Adrenal gland (tissue), 19 donors: ENCODE measurements at regions of chr16 and their contacts with region 1.

Region 1: GRCh38 chr16:3059000-3059722 is 6.3 kb upstream of the IL32 start:
- DNase-seq: peak; percentile 89 to 96 (median 93)
- H3K4me3 ChIP-seq: peak overlapping the region in 3 of 4 donors; percentile 22 to 85 (median 78)
- H3K27ac ChIP-seq: peak overlapping the region in 4 of 5 donors; percentile 30 to 88 (median 66)
- H3K4me1 ChIP-seq: peaks cover 9 to 17% of the 10 kb centered on the region in 2 donors
- H3K27me3 ChIP-seq: no peaks in the 10 kb centered on the region
- CTCF ChIP-seq: peak; percentile 33 to 97 (median 82)
- POLR2A ChIP-seq: peak in 1 of 2 donors; percentile 52

Region 2: GRCh38 chr16:2810651-2811050 is 248.5 kb before region 1 on chr16:
- intact Hi-C with region 1: no loop called
- DNase-seq: no peak
- H3K4me3 ChIP-seq: no peak overlapping the region
- H3K27ac ChIP-seq: no peak overlapping the region
- H3K4me1 ChIP-seq: no peaks in the 10 kb centered on the region
- H3K27me3 ChIP-seq: peaks cover under 1% of the 10 kb centered on the region
- CTCF ChIP-seq: no peak
- POLR2A ChIP-seq: no peak

Region 3: GRCh38 chr16:2990891-2991290 is 68.3 kb before region 1 on chr16:
- intact Hi-C with region 1: no loop called
- DNase-seq: no peak
- H3K4me3 ChIP-seq: no peak overlapping the region
- H3K27ac ChIP-seq: no peak overlapping the region
- H3K4me1 ChIP-seq: no peaks in the 10 kb centered on the region
- H3K27me3 ChIP-seq: no peaks in the 10 kb centered on the region
- CTCF ChIP-seq: no peak
- POLR2A ChIP-seq: no peak

Region 4: GRCh38 chr16:3123986-3124886 is 65.1 kb after region 1 on chr16:
- intact Hi-C with region 1: loop called (anchors 5 to 10 kb)
- DNase-seq: peak; percentile 95 to 98 (median 97)
- H3K4me3 ChIP-seq: peak overlapping the region; percentile 47 to 71 (median 66)
- H3K27ac ChIP-seq: peak overlapping the region in 4 of 5 donors; percentile 25 to 78 (median 64)
- H3K4me1 ChIP-seq: peaks cover 11 to 25% of the 10 kb centered on the region in 2 donors
- H3K27me3 ChIP-seq: no peaks in the 10 kb centered on the region
- CTCF ChIP-seq: peak in 2 of 6 experiments; percentile 23 to 39
- POLR2A ChIP-seq: peak; percentile 19 to 48

Region 5: GRCh38 chr16:3129137-3130131 is 70.3 kb after region 1 on chr16:
- intact Hi-C with region 1: loop called (anchors 5 to 10 kb)
- DNase-seq: peak; percentile 79 to 90 (median 85)
- H3K4me3 ChIP-seq: peak overlapping the region in 1 of 4 donors; percentile 43
- H3K27ac ChIP-seq: peak overlapping the region in 4 of 5 donors; percentile 33 to 84 (median 66)
- H3K4me1 ChIP-seq: peaks cover 13 to 36% of the 10 kb centered on the region in 2 donors
- H3K27me3 ChIP-seq: no peaks in the 10 kb centered on the region
- CTCF ChIP-seq: peak; percentile 84 to 94 (median 90)
- POLR2A ChIP-seq: no peak

Region 6: DNA sequence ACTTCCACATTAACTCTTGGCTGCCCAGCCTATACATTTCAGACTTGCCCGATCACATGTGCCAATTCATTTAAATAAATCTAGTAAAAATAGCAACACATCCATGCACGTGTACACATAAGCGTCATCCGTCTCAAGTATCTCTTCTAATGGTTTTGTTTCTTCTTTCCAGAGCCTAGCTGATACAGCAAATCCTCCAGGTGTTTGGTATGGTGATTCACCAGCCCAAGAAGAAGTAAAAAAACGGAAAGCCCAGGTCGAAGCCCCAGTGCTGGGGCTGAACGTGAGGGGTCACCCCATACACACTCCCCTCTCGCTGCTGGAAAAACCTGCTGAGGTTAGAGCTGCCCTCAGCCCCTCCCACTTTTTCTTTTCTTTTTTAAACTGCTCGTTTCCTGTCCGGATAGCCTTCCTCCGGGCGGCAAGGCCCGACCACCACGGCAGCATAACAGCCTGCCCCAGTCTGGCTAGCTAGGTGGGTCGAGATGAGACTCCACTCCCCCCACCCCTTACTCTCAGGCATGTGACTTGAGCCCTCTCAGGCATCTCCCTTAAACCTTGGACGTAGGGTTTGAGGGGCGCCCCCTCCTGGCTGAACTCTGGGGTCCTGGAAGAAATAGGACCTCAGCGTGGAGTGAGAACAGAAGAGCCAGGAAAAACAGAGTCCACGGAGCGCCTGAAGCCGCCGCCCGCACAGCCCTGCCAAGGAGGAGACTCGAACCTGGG is 114.9 kb after region 1 on chr16:
- intact Hi-C with region 1: loop called in 1 of 2 experiments (anchors 10 kb)
- DNase-seq: no peak
- H3K4me3 ChIP-seq: no peak overlapping the region
- H3K27ac ChIP-seq: no peak overlapping the region
- H3K4me1 ChIP-seq: peaks cover 0 to 6% of the 10 kb centered on the region in 2 donors
- H3K27me3 ChIP-seq: peaks cover 86% of the 10 kb centered on the region
- CTCF ChIP-seq: no peak
- POLR2A ChIP-seq: no peak